ENCODE measurements at regions of chr7 and their contacts with region 1.

Region 1: GRCh38 chr7:106535234-106536026 is 125.5 kb downstream of the CCDC71L start:
- DNase-seq: no peak
- H3K4me3 ChIP-seq: no peak overlapping the region
- H3K27ac ChIP-seq: no peak overlapping the region
- H3K4me1 ChIP-seq: peaks cover 34% of the 10 kb centered on the region
- H3K27me3 ChIP-seq: no peaks in the 10 kb centered on the region
- CTCF ChIP-seq: no peak
- POLR2A ChIP-seq: no peak

Region 2: GRCh38 chr7:106285051-106285854 is 250.2 kb before region 1 on chr7:
- CTCF ChIA-PET with region 1: interaction called, 3 read pairs
- POLR2A ChIA-PET with region 1: interaction called, 9 read pairs
- dilution Hi-C with region 1: no loop called
- intact Hi-C with region 1: loop called (anchors 2 kb)
- DNase-seq: peak; percentile 99
- H3K4me3 ChIP-seq: peak overlapping the region; percentile 56 to 80 (median 72)
- H3K27ac ChIP-seq: peak overlapping the region; percentile 80
- H3K4me1 ChIP-seq: peaks cover 27% of the 10 kb centered on the region
- H3K27me3 ChIP-seq: no peaks in the 10 kb centered on the region
- CTCF ChIP-seq: no peak
- POLR2A ChIP-seq: peak; percentile 93

Region 3: DNA sequence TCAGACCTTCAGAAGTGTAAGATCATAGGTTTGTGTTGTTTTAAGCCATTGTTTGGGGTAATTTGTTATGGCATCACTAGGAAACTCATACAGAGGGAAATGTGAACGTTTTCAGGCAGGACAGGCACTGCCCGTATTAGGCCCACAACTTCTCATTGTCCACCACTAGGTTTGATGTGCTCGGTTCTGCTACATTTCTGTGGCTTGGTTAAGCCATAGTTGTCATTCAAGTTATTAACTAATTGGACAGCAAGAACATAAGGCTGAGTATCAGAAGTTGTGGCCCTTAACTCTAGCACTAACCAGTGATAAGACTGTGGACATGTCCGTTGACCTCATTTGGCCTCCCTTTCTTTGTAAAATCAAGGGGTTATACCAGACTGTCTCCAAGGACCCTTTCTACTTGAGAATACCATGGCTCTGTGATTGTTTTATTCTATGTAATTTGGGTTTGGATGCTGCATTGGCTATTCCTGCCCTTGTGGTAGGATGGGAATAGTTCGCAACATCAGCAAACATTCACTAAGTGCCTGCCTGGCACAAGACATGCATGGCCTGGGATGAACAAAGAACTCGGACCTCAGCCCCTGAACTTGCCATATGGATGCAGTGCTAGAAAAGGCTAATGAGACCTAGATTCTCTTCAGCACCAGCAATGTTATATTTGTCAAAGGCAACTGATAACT is 39.9 kb after region 1 on chr7:
- CTCF ChIA-PET with region 1: no interaction called
- POLR2A ChIA-PET with region 1: no interaction called
- dilution Hi-C with region 1: no loop called
- intact Hi-C with region 1: no loop called
- DNase-seq: no peak
- H3K4me3 ChIP-seq: no peak overlapping the region
- H3K27ac ChIP-seq: no peak overlapping the region
- H3K4me1 ChIP-seq: no peaks in the 10 kb centered on the region
- H3K27me3 ChIP-seq: no peaks in the 10 kb centered on the region
- CTCF ChIP-seq: no peak
- POLR2A ChIP-seq: no peak

Region 4: GRCh38 chr7:106588422-106589198 is 53.2 kb after region 1 on chr7:
- CTCF ChIA-PET with region 1: interaction called, 17 read pairs
- POLR2A ChIA-PET with region 1: interaction called, 5 read pairs
- dilution Hi-C with region 1: no loop called
- intact Hi-C with region 1: loop called (anchors 1 kb)
- DNase-seq: no peak
- H3K4me3 ChIP-seq: no peak overlapping the region
- H3K27ac ChIP-seq: peak overlapping the region; percentile 89
- H3K4me1 ChIP-seq: peaks cover 30% of the 10 kb centered on the region
- H3K27me3 ChIP-seq: no peaks in the 10 kb centered on the region
- CTCF ChIP-seq: no peak
- POLR2A ChIP-seq: no peak

Region 5: GRCh38 chr7:106731187-106731586 is 195.8 kb after region 1 on chr7:
- CTCF ChIA-PET with region 1: interaction called, 26 read pairs
- POLR2A ChIA-PET with region 1: interaction called, 3 read pairs
- dilution Hi-C with region 1: no loop called
- intact Hi-C with region 1: loop called (anchors 1 kb)
- DNase-seq: peak; percentile 96
- H3K4me3 ChIP-seq: peak overlapping the region in 1 of 3 experiments; percentile 0
- H3K27ac ChIP-seq: peak overlapping the region; percentile 44
- H3K4me1 ChIP-seq: peaks cover 27% of the 10 kb centered on the region
- H3K27me3 ChIP-seq: no peaks in the 10 kb centered on the region
- CTCF ChIP-seq: no peak
- POLR2A ChIP-seq: no peak

Region 6: GRCh38 chr7:106978425-106979420 is 443.3 kb after region 1 on chr7:
- CTCF ChIA-PET with region 1: no interaction called
- POLR2A ChIA-PET with region 1: no interaction called
- dilution Hi-C with region 1: no loop called
- intact Hi-C with region 1: no loop called
- DNase-seq: no peak
- H3K4me3 ChIP-seq: no peak overlapping the region
- H3K27ac ChIP-seq: no peak overlapping the region
- H3K4me1 ChIP-seq: peaks cover 5% of the 10 kb centered on the region
- H3K27me3 ChIP-seq: peaks cover 0 to 2% of the 10 kb centered on the region in 2 experiments
- CTCF ChIP-seq: no peak
- POLR2A ChIP-seq: no peak

Region 7: GRCh38 chr7:107078517-107078966 is 543.1 kb after region 1 on chr7:
- CTCF ChIA-PET with region 1: no interaction called
- POLR2A ChIA-PET with region 1: no interaction called
- dilution Hi-C with region 1: no loop called
- intact Hi-C with region 1: loop called (anchors 1 kb)
- DNase-seq: peak; percentile 95
- H3K4me3 ChIP-seq: peak overlapping the region in 1 of 3 experiments; percentile 40
- H3K27ac ChIP-seq: peak overlapping the region; percentile 95
- H3K4me1 ChIP-seq: peaks cover 51% of the 10 kb centered on the region
- H3K27me3 ChIP-seq: no peaks in the 10 kb centered on the region
- CTCF ChIP-seq: no peak
- POLR2A ChIP-seq: peak; percentile 39